ENCODE measurements at regions of chr5 and their contacts with region 1.

Region 1: GRCh38 chr5:110092955-110093785 is 403.4 kb downstream of the MAN2A1 start:
- DNase-seq: no peak
- H3K4me3 ChIP-seq: no peak overlapping the region
- H3K27ac ChIP-seq: no peak overlapping the region
- H3K4me1 ChIP-seq: no peaks in the 10 kb centered on the region
- H3K27me3 ChIP-seq: no peaks in the 10 kb centered on the region
- CTCF ChIP-seq: no peak
- POLR2A ChIP-seq: no peak

Region 2: GRCh38 chr5:109567374-109568044 is 525.7 kb before region 1 on chr5:
- intact Hi-C with region 1: no loop called
- DNase-seq: no peak
- H3K4me3 ChIP-seq: no peak overlapping the region
- H3K27ac ChIP-seq: no peak overlapping the region
- H3K4me1 ChIP-seq: no peaks in the 10 kb centered on the region
- H3K27me3 ChIP-seq: no peaks in the 10 kb centered on the region
- CTCF ChIP-seq: no peak
- POLR2A ChIP-seq: no peak

Region 3: GRCh38 chr5:110840347-110840960 is 747.3 kb after region 1 on chr5:
- intact Hi-C with region 1: loop called (anchors 10 kb)
- DNase-seq: no peak
- H3K4me3 ChIP-seq: no peak overlapping the region
- H3K27ac ChIP-seq: no peak overlapping the region
- H3K4me1 ChIP-seq: no peaks in the 10 kb centered on the region
- H3K27me3 ChIP-seq: no peaks in the 10 kb centered on the region
- CTCF ChIP-seq: no peak
- POLR2A ChIP-seq: no peak